ENCODE measurements at regions of chr22 and their contacts with region 1.

Region 1: GRCh38 chr22:17501679-17502285 is 61.5 kb upstream of the SLC25A18 start:
- DNase-seq: peak in 2 of 5 donors; percentile 19 to 26
- ATAC-seq: peak; percentile 76 to 88 (median 86)
- H3K4me3 ChIP-seq: no peak overlapping the region
- H3K27ac ChIP-seq: no peak overlapping the region
- H3K4me1 ChIP-seq: no peaks in the 10 kb centered on the region
- H3K27me3 ChIP-seq: no peaks in the 10 kb centered on the region
- CTCF ChIP-seq: peak; percentile 51 to 81 (median 69)
- POLR2A ChIP-seq: no peak

Region 2: DNA sequence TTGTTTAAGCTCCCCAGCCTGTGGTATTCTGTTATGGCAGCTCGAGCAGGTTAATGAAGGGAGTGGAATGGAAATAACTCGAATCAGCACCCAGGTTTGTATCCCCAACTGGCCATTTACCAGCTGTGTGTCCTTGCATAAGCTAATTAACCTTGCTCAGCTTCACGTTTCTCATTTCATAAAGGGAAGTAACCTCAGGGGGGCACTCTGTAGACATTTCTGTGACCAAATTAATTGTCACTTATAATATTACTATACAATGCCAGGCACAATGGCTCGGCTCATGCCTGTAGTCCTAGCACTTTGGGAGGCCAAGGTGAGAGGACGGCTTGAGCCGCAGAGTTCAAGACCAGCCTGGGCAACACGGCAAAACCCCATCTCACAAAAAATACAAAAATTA is 296.4 kb before region 1 on chr22:
- intact Hi-C with region 1: loop called in 9 of 10 experiments (anchors 5 to 10 kb)
- DNase-seq: no peak
- ATAC-seq: no peak
- H3K4me3 ChIP-seq: no peak overlapping the region
- H3K27ac ChIP-seq: no peak overlapping the region
- H3K4me1 ChIP-seq: no peaks in the 10 kb centered on the region
- H3K27me3 ChIP-seq: no peaks in the 10 kb centered on the region
- CTCF ChIP-seq: peak in 2 of 12 donors; percentile 5 to 11
- POLR2A ChIP-seq: no peak

Region 3: DNA sequence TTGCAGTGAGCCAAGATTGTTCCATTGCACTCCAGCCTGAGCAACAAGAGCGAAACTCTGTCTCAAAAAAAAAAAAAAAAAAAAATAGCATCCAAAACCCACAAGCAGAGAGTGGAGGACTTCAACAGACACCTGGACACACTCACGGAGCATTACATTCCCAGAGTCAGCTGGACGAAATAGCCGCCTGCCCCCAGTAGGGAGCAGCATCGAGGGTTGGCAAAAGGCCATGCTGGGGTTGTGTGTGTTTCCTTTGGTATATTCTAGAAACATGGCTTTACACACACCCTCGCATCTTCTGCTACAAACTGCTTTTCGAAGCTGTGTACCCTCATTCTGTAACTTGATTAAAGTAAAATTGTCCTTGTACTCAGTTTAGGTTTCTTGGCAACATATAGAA is 287.8 kb before region 1 on chr22:
- intact Hi-C with region 1: loop called in 8 of 10 experiments (anchors 5 to 10 kb)
- DNase-seq: peak; percentile 63 to 77 (median 69)
- ATAC-seq: peak in 3 of 4 donors; percentile 52 to 79 (median 63)
- H3K4me3 ChIP-seq: no peak overlapping the region
- H3K27ac ChIP-seq: no peak overlapping the region
- H3K4me1 ChIP-seq: peaks cover 0 to 27% (median 0%) of the 10 kb centered on the region in 12 donors
- H3K27me3 ChIP-seq: no peaks in the 10 kb centered on the region
- CTCF ChIP-seq: peak; percentile 29 to 61 (median 48)
- POLR2A ChIP-seq: no peak

Region 4: DNA sequence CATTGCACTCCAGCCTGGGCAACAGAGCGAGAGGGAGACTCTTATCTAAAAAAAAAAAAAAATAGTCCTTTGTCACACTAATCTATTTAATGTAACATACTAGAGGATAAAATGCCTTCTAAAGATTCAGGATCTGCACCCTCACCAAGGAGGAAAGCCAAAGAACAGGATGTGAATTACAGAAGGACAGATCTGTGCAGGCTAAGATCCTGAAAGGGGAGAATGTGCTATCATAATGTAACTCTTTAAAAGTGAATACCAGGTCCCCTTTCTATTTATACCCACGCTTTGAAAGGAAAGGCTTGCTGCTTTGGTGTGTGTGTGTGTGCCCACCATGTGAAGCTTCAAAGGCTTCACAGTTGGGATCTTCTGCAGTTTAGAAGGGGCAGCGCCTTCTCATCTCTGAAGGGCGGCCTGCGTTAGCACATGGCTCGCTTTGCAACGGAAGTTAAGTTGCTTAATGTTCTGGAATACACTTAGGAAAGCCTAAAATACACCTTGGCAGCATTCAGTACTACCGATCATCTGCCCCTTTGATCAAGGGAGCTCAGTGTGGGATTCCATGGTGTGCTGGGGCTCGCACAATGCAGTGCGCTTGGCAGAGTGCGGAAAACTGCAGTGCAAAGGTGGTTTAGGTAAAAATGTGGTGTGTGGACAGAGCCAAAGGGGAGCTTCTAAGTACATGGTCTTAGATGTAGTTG is 125.7 kb before region 1 on chr22:
- intact Hi-C with region 1: no loop called
- DNase-seq: peak in 1 of 5 donors; percentile 32
- ATAC-seq: peak in 2 of 4 donors; percentile 29 to 56
- H3K4me3 ChIP-seq: no peak overlapping the region
- H3K27ac ChIP-seq: peak overlapping the region in 1 of 12 donors; percentile 23
- H3K4me1 ChIP-seq: peaks cover 0 to 40% (median 9%) of the 10 kb centered on the region in 12 donors
- H3K27me3 ChIP-seq: peaks cover 0 to 19% (median 0%) of the 10 kb centered on the region in 9 donors
- CTCF ChIP-seq: no peak
- POLR2A ChIP-seq: no peak

Region 5: DNA sequence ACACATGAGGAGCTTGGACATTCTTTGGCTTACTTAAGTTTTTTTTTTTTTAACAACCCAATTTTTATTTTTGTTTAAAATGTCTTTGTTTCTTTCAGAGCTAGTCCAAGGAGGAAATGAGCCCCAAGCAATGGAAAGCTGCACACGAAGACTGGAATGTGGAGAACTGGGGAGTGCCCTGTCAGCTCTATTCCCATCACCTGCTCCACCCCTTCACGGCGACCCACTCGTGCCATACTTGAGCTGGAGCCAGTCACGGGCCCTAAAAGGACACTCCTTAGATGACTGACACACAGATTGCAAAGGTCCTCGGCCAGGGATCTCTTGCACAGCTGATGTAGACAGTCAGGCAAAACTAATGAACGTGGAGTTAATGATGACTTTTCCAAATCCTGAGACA is 51.0 kb after region 1 on chr22:
- intact Hi-C with region 1: no loop called
- DNase-seq: peak in 2 of 5 donors; percentile 62 to 65
- ATAC-seq: peak in 3 of 4 donors; percentile 56 to 67 (median 65)
- H3K4me3 ChIP-seq: no peak overlapping the region
- H3K27ac ChIP-seq: peak overlapping the region in 2 of 12 donors; percentile 7 to 28
- H3K4me1 ChIP-seq: peaks cover 0 to 5% (median 0%) of the 10 kb centered on the region in 12 donors
- H3K27me3 ChIP-seq: no peaks in the 10 kb centered on the region
- CTCF ChIP-seq: no peak
- POLR2A ChIP-seq: no peak

Measured in heart left ventricle (tissue), 16 donors.